ENCODE measurements at regions of chr18 and their contacts with region 1.

Region 1: GRCh38 chr18:33898427-33898826 is 320.4 kb downstream of the ASXL3 start:
- DNase-seq: no peak
- ATAC-seq: no peak
- H3K4me3 ChIP-seq: no peak overlapping the region
- H3K4me3 Mint-ChIP-seq: no peak overlapping the region
- H3K27ac ChIP-seq: no peak overlapping the region
- H3K27ac Mint-ChIP-seq: no peak overlapping the region
- H3K4me1 ChIP-seq: no peaks in the 10 kb centered on the region
- H3K4me1 Mint-ChIP-seq: no peaks in the 10 kb centered on the region
- H3K27me3 ChIP-seq: no peaks in the 10 kb centered on the region
- H3K27me3 Mint-ChIP-seq: no peaks in the 10 kb centered on the region
- CTCF ChIP-seq: no peak

Region 2: DNA sequence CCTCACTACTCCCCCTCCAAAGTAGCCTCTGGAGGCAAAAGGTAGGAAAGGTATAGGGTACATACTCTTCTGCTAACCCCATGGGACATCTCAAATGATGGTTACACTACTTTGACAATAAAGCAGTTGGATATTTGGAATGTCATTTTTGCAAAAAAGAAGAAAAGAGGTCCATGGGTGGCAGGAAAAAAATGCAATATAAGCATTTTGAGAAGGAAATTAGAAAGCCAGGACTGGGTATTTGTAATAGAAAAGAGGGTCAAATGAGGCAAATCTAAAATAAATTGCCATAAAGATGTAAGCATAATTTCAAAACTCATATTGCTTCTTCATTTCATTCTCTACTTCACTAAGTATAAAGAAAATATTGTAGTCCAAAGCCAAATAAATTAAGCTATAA is 46.1 kb after region 1 on chr18:
- CTCF ChIA-PET with region 1: no interaction called
- POLR2A ChIA-PET with region 1: no interaction called
- intact Hi-C with region 1: loop called (anchors 5 kb)
- DNase-seq: no peak
- ATAC-seq: no peak
- H3K4me3 ChIP-seq: no peak overlapping the region
- H3K4me3 Mint-ChIP-seq: no peak overlapping the region
- H3K27ac ChIP-seq: no peak overlapping the region
- H3K27ac Mint-ChIP-seq: no peak overlapping the region
- H3K4me1 ChIP-seq: no peaks in the 10 kb centered on the region
- H3K4me1 Mint-ChIP-seq: no peaks in the 10 kb centered on the region
- H3K27me3 ChIP-seq: no peaks in the 10 kb centered on the region
- H3K27me3 Mint-ChIP-seq: no peaks in the 10 kb centered on the region
- CTCF ChIP-seq: no peak

Measured in B cell (primary cell).